Prostate gland (tissue), 2 donors: ENCODE measurements at regions of chr2 and their contacts with region 1.

Region 1: GRCh38 chr2:28958689-28959088 is 22.4 kb upstream of the TOGARAM2 start:
- DNase-seq: peak; percentile 62
- H3K4me3 ChIP-seq: no peak overlapping the region
- H3K27ac ChIP-seq: no peak overlapping the region
- H3K4me1 ChIP-seq: no peaks in the 10 kb centered on the region
- H3K27me3 ChIP-seq: no peaks in the 10 kb centered on the region
- CTCF ChIP-seq: peak; percentile 11 to 82 (median 64)
- POLR2A ChIP-seq: no peak

Region 2: GRCh38 chr2:28821295-28821958 is 137.3 kb before region 1 on chr2:
- intact Hi-C with region 1: loop called (anchors 10 kb)
- DNase-seq: peak; percentile 53
- H3K4me3 ChIP-seq: no peak overlapping the region
- H3K27ac ChIP-seq: no peak overlapping the region
- H3K4me1 ChIP-seq: no peaks in the 10 kb centered on the region
- H3K27me3 ChIP-seq: no peaks in the 10 kb centered on the region
- CTCF ChIP-seq: peak in 3 of 4 experiments; percentile 57 to 72 (median 61)
- POLR2A ChIP-seq: no peak

Region 3: GRCh38 chr2:29014811-29015421 is 56.2 kb after region 1 on chr2:
- intact Hi-C with region 1: loop called (anchors 5 kb)
- DNase-seq: no peak
- H3K4me3 ChIP-seq: no peak overlapping the region
- H3K27ac ChIP-seq: peak overlapping the region in 1 of 2 donors; percentile 15
- H3K4me1 ChIP-seq: no peaks in the 10 kb centered on the region
- H3K27me3 ChIP-seq: no peaks in the 10 kb centered on the region
- CTCF ChIP-seq: no peak
- POLR2A ChIP-seq: no peak

Region 4: GRCh38 chr2:29196792-29197788 is 238.4 kb after region 1 on chr2:
- intact Hi-C with region 1: loop called (anchors 1 kb)
- DNase-seq: peak; percentile 63
- H3K4me3 ChIP-seq: no peak overlapping the region
- H3K27ac ChIP-seq: no peak overlapping the region
- H3K4me1 ChIP-seq: no peaks in the 10 kb centered on the region
- H3K27me3 ChIP-seq: no peaks in the 10 kb centered on the region
- CTCF ChIP-seq: peak; percentile 65 to 84 (median 80)
- POLR2A ChIP-seq: no peak

Region 5: GRCh38 chr2:29841386-29842004 is 882.8 kb after region 1 on chr2:
- intact Hi-C with region 1: loop called (anchors 10 kb)
- DNase-seq: peak; percentile 5
- H3K4me3 ChIP-seq: no peak overlapping the region
- H3K27ac ChIP-seq: no peak overlapping the region
- H3K4me1 ChIP-seq: no peaks in the 10 kb centered on the region
- H3K27me3 ChIP-seq: no peaks in the 10 kb centered on the region
- CTCF ChIP-seq: peak; percentile 26 to 66 (median 62)
- POLR2A ChIP-seq: no peak